CD4-positive, alpha-beta memory T cell (primary cell): ENCODE measurements at regions of chr16 and their contacts with region 1.

Region 1: GRCh38 chr16:29700253-29700987 is 21.4 kb downstream of the QPRT start:
- DNase-seq: peak; percentile 78 to 79 (median 79)
- H3K4me3 ChIP-seq: peak overlapping the region in 1 of 2 donors; percentile 11
- H3K4me3 Mint-ChIP-seq: peak overlapping the region; percentile 75 to 87 (median 80)
- H3K27ac ChIP-seq: peak overlapping the region; percentile 61
- H3K27ac Mint-ChIP-seq: peak overlapping the region; percentile 95 to 100 (median 98)
- H3K4me1 ChIP-seq: peaks cover 34% of the 10 kb centered on the region
- H3K4me1 Mint-ChIP-seq: peaks cover 25 to 37% (median 31%) of the 10 kb centered on the region in 4 donors
- H3K27me3 ChIP-seq: no peaks in the 10 kb centered on the region
- H3K27me3 Mint-ChIP-seq: no peaks in the 10 kb centered on the region

Region 2: GRCh38 chr16:28873536-28874201 is 826.8 kb before region 1 on chr16:
- CTCF ChIA-PET with region 1: no interaction called
- POLR2A ChIA-PET with region 1: no interaction called
- intact Hi-C with region 1: no loop called
- DNase-seq: peak in 4 of 5 donors; percentile 55 to 60 (median 56)
- H3K4me3 ChIP-seq: no peak overlapping the region
- H3K4me3 Mint-ChIP-seq: no peak overlapping the region
- H3K27ac ChIP-seq: no peak overlapping the region
- H3K27ac Mint-ChIP-seq: peak overlapping the region in 2 of 7 donors; percentile 53 to 57
- H3K4me1 ChIP-seq: no peaks in the 10 kb centered on the region
- H3K4me1 Mint-ChIP-seq: peaks cover 0 to 3% (median 1%) of the 10 kb centered on the region in 4 donors
- H3K27me3 ChIP-seq: no peaks in the 10 kb centered on the region
- H3K27me3 Mint-ChIP-seq: no peaks in the 10 kb centered on the region

Region 3: DNA sequence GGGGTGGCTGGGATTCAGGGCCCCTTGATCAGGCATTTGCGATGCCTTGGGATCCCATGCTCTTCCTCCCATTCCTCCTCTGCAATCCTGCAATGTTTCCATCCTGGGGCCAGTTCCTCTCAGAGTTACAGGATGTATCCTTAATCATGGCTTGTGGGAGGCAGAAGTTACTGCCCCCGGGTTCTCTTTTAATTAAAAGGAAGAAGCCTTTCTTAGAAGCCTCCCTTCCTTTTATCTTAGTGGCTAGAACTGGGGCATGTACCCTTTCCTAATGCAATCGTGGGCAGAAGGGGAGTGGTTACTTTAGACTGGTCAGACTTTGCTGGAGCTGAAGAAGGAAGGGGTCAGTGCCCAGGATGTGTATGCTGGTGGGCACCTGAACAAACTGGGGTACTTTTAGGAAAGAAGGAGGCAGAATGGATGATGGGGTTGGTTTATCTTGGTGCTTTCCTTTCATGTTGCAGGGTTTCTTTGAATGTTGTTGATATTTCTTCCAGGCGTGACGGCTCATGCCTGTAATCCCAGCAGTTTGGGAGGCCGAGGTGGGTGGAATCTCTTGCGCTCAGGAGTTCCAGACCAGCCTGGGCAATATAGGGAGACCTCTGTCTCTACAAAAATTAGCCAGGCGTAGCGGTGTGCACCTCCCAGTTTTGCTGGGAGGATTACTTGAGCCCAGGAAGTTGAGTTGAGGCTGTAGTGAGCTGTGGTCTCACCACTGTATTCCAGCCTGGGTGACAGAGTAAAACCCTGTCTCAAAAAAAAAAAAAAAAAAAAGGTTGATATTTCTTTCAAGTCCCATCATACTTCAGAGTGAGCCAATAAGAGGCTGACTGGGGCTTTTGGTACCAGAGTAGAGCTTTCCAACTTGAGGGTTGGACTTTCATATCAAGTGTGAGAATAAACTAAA is 50.6 kb before region 1 on chr16:
- CTCF ChIA-PET with region 1: no interaction called
- POLR2A ChIA-PET with region 1: no interaction called
- intact Hi-C with region 1: no loop called
- DNase-seq: no peak
- H3K4me3 ChIP-seq: no peak overlapping the region
- H3K4me3 Mint-ChIP-seq: no peak overlapping the region
- H3K27ac ChIP-seq: no peak overlapping the region
- H3K27ac Mint-ChIP-seq: peak overlapping the region in 4 of 7 donors; percentile 18 to 85 (median 53)
- H3K4me1 ChIP-seq: peaks cover 8% of the 10 kb centered on the region
- H3K4me1 Mint-ChIP-seq: peaks cover 9 to 13% (median 10%) of the 10 kb centered on the region in 4 donors
- H3K27me3 ChIP-seq: no peaks in the 10 kb centered on the region
- H3K27me3 Mint-ChIP-seq: no peaks in the 10 kb centered on the region

Region 4: GRCh38 chr16:29710227-29711219 is 10.1 kb after region 1 on chr16:
- CTCF ChIA-PET with region 1: interaction called, 172 read pairs
- POLR2A ChIA-PET with region 1: interaction called, 38 read pairs
- intact Hi-C with region 1: loop called (anchors 1 kb)
- DNase-seq: peak; percentile 64 to 73 (median 69)
- H3K4me3 ChIP-seq: no peak overlapping the region
- H3K4me3 Mint-ChIP-seq: peak overlapping the region in 1 of 8 donors; percentile 12
- H3K27ac ChIP-seq: no peak overlapping the region
- H3K27ac Mint-ChIP-seq: peak overlapping the region in 6 of 7 donors; percentile 8 to 95 (median 89)
- H3K4me1 ChIP-seq: peaks cover 10% of the 10 kb centered on the region
- H3K4me1 Mint-ChIP-seq: peaks cover 6 to 25% (median 12%) of the 10 kb centered on the region in 4 donors
- H3K27me3 ChIP-seq: no peaks in the 10 kb centered on the region
- H3K27me3 Mint-ChIP-seq: no peaks in the 10 kb centered on the region

Region 5: GRCh38 chr16:29738514-29738913 is 38.1 kb after region 1 on chr16:
- CTCF ChIA-PET with region 1: interaction called, 21 read pairs
- POLR2A ChIA-PET with region 1: interaction called, 122 read pairs
- intact Hi-C with region 1: loop called (anchors 1 kb)
- DNase-seq: peak; percentile 80 to 87 (median 84)
- H3K4me3 ChIP-seq: no peak overlapping the region
- H3K4me3 Mint-ChIP-seq: peak overlapping the region; percentile 3 to 73 (median 68)
- H3K27ac ChIP-seq: peak overlapping the region; percentile 62
- H3K27ac Mint-ChIP-seq: peak overlapping the region; percentile 90 to 100 (median 94)
- H3K4me1 ChIP-seq: peaks cover 81% of the 10 kb centered on the region
- H3K4me1 Mint-ChIP-seq: peaks cover 63 to 91% (median 74%) of the 10 kb centered on the region in 4 donors
- H3K27me3 ChIP-seq: no peaks in the 10 kb centered on the region
- H3K27me3 Mint-ChIP-seq: no peaks in the 10 kb centered on the region

Region 6: DNA sequence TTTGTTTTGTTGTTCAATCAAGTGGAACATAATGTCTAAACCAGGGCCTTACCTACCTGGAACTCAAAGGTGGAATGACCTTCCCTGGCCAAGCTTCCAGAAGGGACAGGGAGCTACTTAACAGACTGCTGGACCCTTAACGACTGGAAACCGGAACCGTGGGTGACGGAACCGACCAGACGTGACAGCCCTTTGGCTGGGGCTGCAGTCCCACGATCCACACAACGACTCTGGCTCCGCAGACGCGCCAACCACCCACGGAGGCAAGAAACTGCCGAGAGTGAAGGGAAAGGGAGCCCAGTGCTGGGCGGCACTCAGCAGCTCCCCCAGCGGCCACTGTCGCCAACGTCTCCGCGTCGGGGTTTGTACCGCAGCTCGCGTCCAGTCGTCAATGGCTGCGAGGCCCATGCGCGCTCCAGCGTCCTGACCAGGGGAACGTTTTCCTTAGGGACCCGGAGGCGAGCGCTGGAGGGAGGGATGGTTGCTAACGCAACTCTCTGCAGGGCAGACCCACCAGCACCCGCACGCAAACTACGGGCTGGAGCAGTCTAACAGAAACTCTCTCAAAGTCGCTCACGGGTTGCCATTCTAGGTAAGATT is 84.6 kb after region 1 on chr16:
- CTCF ChIA-PET with region 1: interaction called, 59 read pairs
- POLR2A ChIA-PET with region 1: interaction called, 119 read pairs
- intact Hi-C with region 1: loop called (anchors 1 kb)
- DNase-seq: peak; percentile 70 to 77 (median 74)
- H3K4me3 ChIP-seq: peak overlapping the region in 1 of 2 donors; percentile 44
- H3K4me3 Mint-ChIP-seq: peak overlapping the region; percentile 57 to 86 (median 78)
- H3K27ac ChIP-seq: peak overlapping the region; percentile 47
- H3K27ac Mint-ChIP-seq: peak overlapping the region; percentile 33 to 92 (median 87)
- H3K4me1 ChIP-seq: peaks cover 25% of the 10 kb centered on the region
- H3K4me1 Mint-ChIP-seq: peaks cover 12 to 30% (median 24%) of the 10 kb centered on the region in 4 donors
- H3K27me3 ChIP-seq: no peaks in the 10 kb centered on the region
- H3K27me3 Mint-ChIP-seq: no peaks in the 10 kb centered on the region

Region 7: GRCh38 chr16:29825145-29826044 is 125.0 kb after region 1 on chr16:
- CTCF ChIA-PET with region 1: interaction called, 87 read pairs
- POLR2A ChIA-PET with region 1: interaction called, 21 read pairs
- intact Hi-C with region 1: no loop called
- DNase-seq: peak; percentile 26 to 57 (median 29)
- H3K4me3 ChIP-seq: peak overlapping the region in 1 of 2 donors; percentile 25
- H3K4me3 Mint-ChIP-seq: peak overlapping the region; percentile 63 to 89 (median 81)
- H3K27ac ChIP-seq: peak overlapping the region; percentile 3
- H3K27ac Mint-ChIP-seq: peak overlapping the region; percentile 80 to 95 (median 90)
- H3K4me1 ChIP-seq: peaks cover 92% of the 10 kb centered on the region
- H3K4me1 Mint-ChIP-seq: peaks cover 24 to 92% (median 55%) of the 10 kb centered on the region in 4 donors
- H3K27me3 ChIP-seq: no peaks in the 10 kb centered on the region
- H3K27me3 Mint-ChIP-seq: no peaks in the 10 kb centered on the region

Region 8: DNA sequence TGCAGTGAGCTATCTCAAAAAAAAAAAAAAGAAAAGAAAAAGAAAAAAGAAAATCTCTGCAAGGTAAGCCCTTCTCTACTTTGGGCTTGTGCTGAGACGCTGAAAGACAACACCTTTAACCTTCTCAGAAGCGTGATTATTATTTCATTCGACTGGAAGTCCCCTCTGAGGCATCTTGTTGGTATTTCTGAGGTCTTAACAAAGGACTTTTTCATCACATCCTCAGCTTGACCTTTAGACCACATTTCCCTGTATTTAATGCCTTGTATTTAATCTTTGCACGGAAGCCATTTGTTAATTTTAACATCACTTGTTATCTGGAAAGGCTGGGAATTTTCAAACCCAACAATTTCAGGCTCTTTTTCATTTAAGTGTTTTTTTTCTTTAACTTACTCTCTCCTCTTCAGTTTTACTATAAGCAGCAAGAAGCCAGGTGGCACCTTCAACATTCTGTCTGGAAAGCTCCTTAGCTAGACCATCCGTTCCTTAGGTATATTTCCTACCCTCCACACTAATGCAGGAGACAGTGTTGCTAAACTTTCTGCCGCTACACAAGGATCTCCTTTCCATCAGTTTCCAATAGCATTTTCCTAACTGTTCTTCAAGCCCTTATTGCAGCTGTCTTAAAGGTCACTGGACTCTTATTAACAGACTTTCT is 215.3 kb after region 1 on chr16:
- CTCF ChIA-PET with region 1: no interaction called
- POLR2A ChIA-PET with region 1: no interaction called
- intact Hi-C with region 1: no loop called
- DNase-seq: no peak
- H3K4me3 ChIP-seq: no peak overlapping the region
- H3K4me3 Mint-ChIP-seq: no peak overlapping the region
- H3K27ac ChIP-seq: no peak overlapping the region
- H3K27ac Mint-ChIP-seq: peak overlapping the region in 3 of 7 donors; percentile 11 to 64 (median 16)
- H3K4me1 ChIP-seq: no peaks in the 10 kb centered on the region
- H3K4me1 Mint-ChIP-seq: peaks cover 0 to 6% (median 3%) of the 10 kb centered on the region in 4 donors
- H3K27me3 ChIP-seq: no peaks in the 10 kb centered on the region
- H3K27me3 Mint-ChIP-seq: no peaks in the 10 kb centered on the region

Region 9: GRCh38 chr16:30005341-30006094 is 305.1 kb after region 1 on chr16:
- CTCF ChIA-PET with region 1: interaction called, 16 read pairs
- POLR2A ChIA-PET with region 1: interaction called, 4 read pairs
- intact Hi-C with region 1: loop called (anchors 2 kb)
- DNase-seq: peak in 4 of 5 donors; percentile 39 to 48 (median 44)
- H3K4me3 ChIP-seq: no peak overlapping the region
- H3K4me3 Mint-ChIP-seq: no peak overlapping the region
- H3K27ac ChIP-seq: no peak overlapping the region
- H3K27ac Mint-ChIP-seq: no peak overlapping the region
- H3K4me1 ChIP-seq: peaks cover 5% of the 10 kb centered on the region
- H3K4me1 Mint-ChIP-seq: peaks cover 2 to 5% (median 4%) of the 10 kb centered on the region in 4 donors
- H3K27me3 ChIP-seq: peaks cover 6% of the 10 kb centered on the region
- H3K27me3 Mint-ChIP-seq: peaks cover 2 to 11% of the 10 kb centered on the region in 2 donors

Region 10: GRCh38 chr16:30957456-30958174 is 1257.2 kb after region 1 on chr16 and contains the start of gene SETD1A:
- CTCF ChIA-PET with region 1: no interaction called
- POLR2A ChIA-PET with region 1: no interaction called
- intact Hi-C with region 1: no loop called
- DNase-seq: peak; percentile 97 to 98 (median 98)
- H3K4me3 ChIP-seq: peak within 1 kb of the TSS; percentile 85 to 95
- H3K4me3 Mint-ChIP-seq: peak within 1 kb of the TSS; percentile 95 to 99 (median 96)
- H3K27ac ChIP-seq: peak within 1 kb of the TSS; percentile 92
- H3K27ac Mint-ChIP-seq: peak within 1 kb of the TSS; percentile 98 to 100 (median 99)
- H3K4me1 ChIP-seq: peaks cover 30% of the 10 kb centered on the region
- H3K4me1 Mint-ChIP-seq: peaks cover 13 to 43% (median 31%) of the 10 kb centered on the region in 4 donors
- H3K27me3 ChIP-seq: no peaks in the 10 kb centered on the region
- H3K27me3 Mint-ChIP-seq: peaks cover 0 to 4% of the 10 kb centered on the region in 2 donors
- total RNA-seq, gene SETD1A: 32.1 to 33.2 TPM